H1 (cell line): ENCODE measurements at regions of chr22 and their contacts with region 1.

Region 1: GRCh38 chr22:31107178-31107893 is at the start of gene SELENOM:
- DNase-seq: peak; percentile 89 to 95
- H3K4me3 ChIP-seq: peak within 1 kb of the TSS; percentile 49 to 77 (median 68)
- H3K27ac ChIP-seq: no peak within 1 kb of the TSS
- H3K4me1 ChIP-seq: peaks cover 0 to 15% (median 11%) of the 10 kb centered on the region in 4 experiments; a peak in 5 of 7 replicates
- H3K27me3 ChIP-seq: peaks cover 10 to 23% (median 22%) of the 10 kb centered on the region in 4 experiments
- CTCF ChIP-seq: peak; percentile 75 to 83 (median 76)
- EP300 ChIP-seq: no peak
- POLR2A ChIP-seq: peak in 1 of 2 experiments; percentile 58; a peak in 2 of 3 replicates
- RAD21 ChIP-seq: peak; percentile 78
- total RNA-seq, gene SELENOM: 21.8 and 22.7 TPM in 2 replicates

Region 2: GRCh38 chr22:30902496-30903357 is 204.6 kb before region 1 on chr22:
- CTCF ChIA-PET with region 1: no interaction called
- POLR2A ChIA-PET with region 1: no interaction called
- DNase-seq: peak in 1 of 2 experiments; percentile 20
- H3K4me3 ChIP-seq: no peak overlapping the region
- H3K27ac ChIP-seq: no peak overlapping the region
- H3K4me1 ChIP-seq: no peaks in the 10 kb centered on the region
- H3K27me3 ChIP-seq: no peaks in the 10 kb centered on the region
- CTCF ChIP-seq: no peak
- EP300 ChIP-seq: no peak
- POLR2A ChIP-seq: no peak
- RAD21 ChIP-seq: no peak

Region 3: DNA sequence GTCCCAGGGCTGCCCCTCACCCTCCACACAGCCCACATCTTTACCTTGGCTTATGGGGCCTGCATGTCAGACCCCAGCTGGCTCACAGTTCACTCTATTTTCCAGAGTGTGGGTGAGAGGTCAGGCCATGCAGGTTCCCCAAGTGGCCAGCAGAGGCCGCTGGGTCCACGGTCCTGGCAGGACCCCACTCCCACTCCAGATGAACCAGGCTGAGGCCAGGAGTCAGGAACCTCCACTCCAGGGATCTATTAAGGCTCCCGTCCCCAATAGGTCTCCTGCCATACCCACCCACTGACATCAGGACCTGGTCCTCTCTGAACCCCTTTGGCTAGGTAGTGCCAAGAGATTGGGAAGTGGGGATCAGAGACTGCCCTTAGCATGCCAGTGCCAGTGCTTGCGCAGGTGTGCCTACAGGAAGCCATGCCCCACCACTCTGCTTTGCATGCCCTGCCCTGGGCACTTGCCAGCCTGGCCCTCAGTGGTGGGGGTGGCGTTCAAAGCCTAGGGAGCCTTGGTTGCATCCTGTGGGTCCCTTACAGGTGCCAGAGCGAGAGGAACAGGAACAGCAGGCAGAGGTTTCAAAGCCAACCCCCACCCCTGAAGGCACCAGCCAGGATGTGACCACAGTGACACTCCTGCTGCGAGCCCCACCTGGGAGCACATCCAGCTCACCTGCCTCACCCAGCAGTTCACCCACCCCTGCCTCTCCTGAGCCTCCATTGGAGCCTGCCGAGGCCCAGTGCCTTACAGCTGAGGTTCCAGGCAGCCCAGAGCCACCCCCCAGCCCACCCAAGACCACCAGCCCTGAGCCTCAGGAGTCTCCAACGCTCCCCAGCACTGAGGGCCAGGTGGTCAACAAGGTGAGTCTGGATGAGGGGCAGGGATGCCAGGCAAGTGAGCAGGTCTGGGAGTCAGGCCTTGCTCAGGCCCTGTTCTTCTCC is 17.9 kb before region 1 on chr22:
- CTCF ChIA-PET with region 1: interaction called, 207 read pairs
- POLR2A ChIA-PET with region 1: interaction called, 25 read pairs
- DNase-seq: peak in 1 of 2 experiments; percentile 67
- H3K4me3 ChIP-seq: no peak overlapping the region
- H3K27ac ChIP-seq: no peak overlapping the region
- H3K4me1 ChIP-seq: peaks cover 0 to 13% (median 4%) of the 10 kb centered on the region in 4 experiments; a peak in 5 of 7 replicates
- H3K27me3 ChIP-seq: no peaks in the 10 kb centered on the region
- CTCF ChIP-seq: peak; percentile 83 to 88 (median 83)
- EP300 ChIP-seq: no peak
- POLR2A ChIP-seq: no peak
- RAD21 ChIP-seq: peak; percentile 69 to 79

Region 4: GRCh38 chr22:31122532-31123291 is 15.4 kb after region 1 on chr22 and contains the start of gene INPP5J:
- CTCF ChIA-PET with region 1: interaction called, 23 read pairs
- POLR2A ChIA-PET with region 1: interaction called, 5 read pairs
- DNase-seq: no peak
- H3K4me3 ChIP-seq: peak within 1 kb of the TSS; percentile 17 to 56 (median 36)
- H3K27ac ChIP-seq: no peak within 1 kb of the TSS
- H3K4me1 ChIP-seq: peaks cover 0 to 23% (median 7%) of the 10 kb centered on the region in 4 experiments; a peak in 6 of 7 replicates
- H3K27me3 ChIP-seq: no peaks in the 10 kb centered on the region; a peak in 1 of 7 replicates
- CTCF ChIP-seq: no peak
- EP300 ChIP-seq: no peak
- POLR2A ChIP-seq: peak in 1 of 2 experiments; percentile 36; a peak in 1 of 3 replicates
- RAD21 ChIP-seq: no peak
- total RNA-seq, gene INPP5J: 6.0 and 6.4 TPM in 2 replicates

Region 5: GRCh38 chr22:31130873-31131272 is 23.5 kb after region 1 on chr22:
- CTCF ChIA-PET with region 1: interaction called, 23 read pairs
- POLR2A ChIA-PET with region 1: interaction called, 6 read pairs
- DNase-seq: no peak
- H3K4me3 ChIP-seq: no peak overlapping the region
- H3K27ac ChIP-seq: no peak overlapping the region
- H3K4me1 ChIP-seq: peaks cover 0 to 20% (median 7%) of the 10 kb centered on the region in 4 experiments; a peak in 6 of 7 replicates
- H3K27me3 ChIP-seq: no peaks in the 10 kb centered on the region
- CTCF ChIP-seq: no peak
- EP300 ChIP-seq: no peak
- POLR2A ChIP-seq: no peak
- RAD21 ChIP-seq: no peak

Region 6: DNA sequence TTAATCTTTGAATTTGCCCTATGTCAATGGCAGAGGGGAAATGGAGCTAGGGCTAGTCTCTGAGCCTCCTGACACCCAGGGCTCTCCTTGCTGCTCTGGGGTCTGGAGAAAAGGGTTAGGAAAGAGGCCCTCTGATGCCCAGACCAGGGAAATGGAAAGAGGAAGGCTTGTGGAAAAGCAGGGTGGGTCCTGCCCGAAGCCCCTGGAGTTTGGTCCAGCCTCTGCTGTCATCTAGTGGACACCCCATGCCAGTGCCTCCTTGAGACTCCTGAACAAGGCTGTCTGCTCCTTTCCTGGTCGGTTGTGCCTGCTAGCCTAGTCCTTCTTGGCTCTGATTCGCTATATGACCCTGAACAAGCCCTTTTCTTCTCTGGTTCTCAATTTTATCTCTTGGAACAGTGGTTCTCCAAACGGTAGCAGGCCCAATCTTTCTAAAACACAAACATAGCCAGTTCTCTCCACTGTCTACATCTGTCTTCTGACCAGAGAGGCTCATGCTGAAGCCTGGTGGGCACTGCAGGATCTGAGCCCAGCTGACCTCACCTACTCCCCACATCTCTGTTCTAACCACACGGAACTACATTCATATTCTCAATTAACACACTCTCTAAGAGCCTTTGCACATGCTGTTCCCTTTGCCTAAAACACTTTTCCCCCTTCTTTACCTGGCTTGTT is 41.8 kb after region 1 on chr22:
- CTCF ChIA-PET with region 1: interaction called, 124 read pairs
- POLR2A ChIA-PET with region 1: no interaction called
- DNase-seq: peak; percentile 71 to 80
- H3K4me3 ChIP-seq: no peak overlapping the region
- H3K27ac ChIP-seq: no peak overlapping the region
- H3K4me1 ChIP-seq: no peaks in the 10 kb centered on the region; a peak in 1 of 7 replicates
- H3K27me3 ChIP-seq: no peaks in the 10 kb centered on the region
- CTCF ChIP-seq: peak; percentile 94 to 100 (median 97)
- EP300 ChIP-seq: no peak
- POLR2A ChIP-seq: no peak
- RAD21 ChIP-seq: peak; percentile 99 to 100

Region 7: GRCh38 chr22:31160328-31160978 is 53.1 kb after region 1 on chr22:
- CTCF ChIA-PET with region 1: interaction called, 10 read pairs
- POLR2A ChIA-PET with region 1: interaction called, 4 read pairs
- DNase-seq: peak in 1 of 2 experiments; percentile 63
- H3K4me3 ChIP-seq: peak overlapping the region; percentile 71 to 87 (median 74)
- H3K27ac ChIP-seq: 0 out of 2 replicates have a peak overlapping the region, but pooled peaks have one; percentile 23
- H3K4me1 ChIP-seq: peaks cover 0 to 8% (median 1%) of the 10 kb centered on the region in 4 experiments; a peak in 2 of 7 replicates
- H3K27me3 ChIP-seq: peaks cover 0 to 25% (median 7%) of the 10 kb centered on the region in 4 experiments; a peak in 6 of 7 replicates
- CTCF ChIP-seq: no peak
- EP300 ChIP-seq: no peak
- POLR2A ChIP-seq: no peak
- RAD21 ChIP-seq: no peak